ENCODE measurements at regions of chr7 and their contacts with region 1.

Region 1: DNA sequence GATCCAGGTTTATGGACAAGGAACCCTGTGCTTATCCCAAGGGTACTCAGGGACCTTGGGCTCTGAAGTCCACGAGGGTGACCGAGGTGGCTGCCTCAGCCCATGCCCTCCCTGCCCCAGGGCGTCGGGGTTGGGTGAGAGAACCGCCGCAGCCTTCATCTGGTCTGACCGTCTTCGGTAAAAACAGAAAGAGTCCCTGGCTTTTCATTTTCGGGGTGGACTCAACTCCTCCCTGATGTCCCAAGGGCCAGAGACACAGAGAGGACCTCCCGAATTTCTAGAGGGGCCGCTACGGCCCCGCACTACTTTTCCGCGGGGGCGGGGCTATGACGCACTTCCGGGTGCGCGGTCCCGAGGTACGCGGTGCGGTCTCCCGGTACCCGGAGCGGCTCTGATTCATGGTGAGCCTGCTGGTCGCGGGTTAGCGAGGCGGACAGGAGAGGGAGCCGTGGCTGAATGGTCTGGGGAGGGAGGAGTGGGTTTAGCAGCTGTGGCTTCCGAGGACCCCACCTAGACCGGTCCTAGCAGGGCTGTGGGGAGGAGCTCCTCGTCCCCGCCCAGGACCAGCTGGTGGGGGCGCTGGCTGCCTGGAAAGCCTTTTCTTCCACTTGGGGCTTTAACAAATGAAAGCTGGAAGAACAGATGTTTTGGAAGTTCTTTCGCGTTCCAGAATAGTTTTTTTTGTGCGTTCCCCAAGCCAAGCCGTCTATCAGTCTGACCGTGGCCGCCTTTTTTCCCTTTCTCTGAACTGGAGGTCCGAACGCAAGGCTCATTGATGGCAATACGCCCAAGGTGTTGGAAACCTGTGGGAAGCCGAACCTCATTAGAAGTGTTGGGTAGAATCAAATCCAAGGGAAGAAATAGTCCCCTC is at the start of gene ZSCAN21:
- DNase-seq: peak; percentile 84
- H3K4me3 ChIP-seq: peak within 1 kb of the TSS; percentile 64
- H3K27ac ChIP-seq: peak within 1 kb of the TSS; percentile 90
- H3K4me1 ChIP-seq: peaks cover 5% of the 10 kb centered on the region
- H3K27me3 ChIP-seq: no peaks in the 10 kb centered on the region
- CTCF ChIP-seq: no peak
- total RNA-seq, gene ZSCAN21: 6.2 to 7.7 TPM

Region 2: DNA sequence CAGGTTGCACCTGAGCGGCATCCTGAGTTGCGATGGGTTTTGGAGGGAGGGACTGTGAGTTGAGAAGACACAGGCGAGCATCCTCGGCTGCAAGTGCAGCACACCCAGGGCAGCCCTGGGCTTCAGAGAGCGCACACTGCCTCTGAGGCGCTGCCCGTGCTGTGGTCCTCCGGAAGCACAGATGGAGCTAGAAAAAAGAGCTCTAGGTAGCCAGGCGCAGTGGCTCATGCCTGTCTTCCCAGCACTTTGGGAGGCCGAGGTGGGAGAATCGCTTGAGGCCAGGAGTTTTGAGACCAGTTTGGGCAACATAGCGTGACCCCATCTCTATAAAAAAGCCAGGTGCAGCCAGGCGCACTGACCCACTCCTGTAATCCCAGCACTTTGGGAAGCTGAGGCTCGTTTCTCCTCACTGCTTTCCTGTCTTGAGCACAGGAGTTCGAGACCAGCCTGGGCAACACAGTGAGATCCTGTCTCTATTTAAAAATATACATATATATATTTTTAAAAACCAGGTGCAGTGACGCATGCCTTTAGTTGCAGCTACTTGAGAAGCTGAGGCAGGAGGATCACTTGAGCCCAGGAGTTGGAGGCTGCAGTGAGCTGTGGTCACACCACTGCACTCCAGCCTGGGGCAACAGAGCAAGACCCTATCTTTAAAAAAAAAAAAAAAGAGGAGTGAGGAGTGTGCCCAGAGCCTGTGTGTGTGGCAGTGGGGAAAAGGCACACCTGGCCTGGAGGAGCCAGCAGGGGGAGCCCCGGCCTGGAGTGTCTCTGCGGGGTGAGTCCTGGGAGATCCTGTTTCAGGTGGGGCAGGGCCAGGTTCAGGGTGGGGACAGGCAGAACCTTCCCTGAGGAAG is 684.5 kb before region 1 on chr7:
- intact Hi-C with region 1: no loop called
- DNase-seq: peak; percentile 82
- H3K4me3 ChIP-seq: no peak overlapping the region
- H3K27ac ChIP-seq: no peak overlapping the region
- H3K4me1 ChIP-seq: no peaks in the 10 kb centered on the region
- H3K27me3 ChIP-seq: no peaks in the 10 kb centered on the region
- CTCF ChIP-seq: peak; percentile 67

Region 3: DNA sequence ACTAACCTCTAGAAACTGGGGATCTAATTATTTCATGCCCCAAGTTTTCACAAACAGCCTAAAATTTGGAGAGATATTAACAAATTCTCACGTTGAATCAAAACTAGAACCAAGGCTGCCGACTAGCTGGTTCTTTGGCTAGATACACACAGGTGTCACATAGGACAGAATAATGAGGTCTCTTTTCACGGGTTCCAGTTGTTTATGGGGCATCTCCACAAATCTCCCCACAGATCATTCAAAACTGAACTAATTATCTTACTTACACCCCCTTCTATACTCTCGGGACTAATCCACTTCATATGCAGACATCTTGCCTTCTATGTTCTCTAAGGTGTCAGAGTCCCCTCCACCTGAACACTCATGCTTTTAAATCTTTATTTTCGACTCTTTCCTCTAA is 156.4 kb before region 1 on chr7:
- intact Hi-C with region 1: no loop called
- DNase-seq: no peak
- H3K4me3 ChIP-seq: no peak overlapping the region
- H3K27ac ChIP-seq: no peak overlapping the region
- H3K4me1 ChIP-seq: no peaks in the 10 kb centered on the region
- H3K27me3 ChIP-seq: no peaks in the 10 kb centered on the region
- CTCF ChIP-seq: no peak

Region 4: GRCh38 chr7:100081535-100082102 is 31.9 kb after region 1 on chr7 and contains the start of gene ZNF3:
- intact Hi-C with region 1: loop called (anchors 5 kb)
- DNase-seq: peak; percentile 99
- H3K4me3 ChIP-seq: peak within 1 kb of the TSS; percentile 97
- H3K27ac ChIP-seq: peak within 1 kb of the TSS; percentile 82
- H3K4me1 ChIP-seq: peaks cover 19% of the 10 kb centered on the region
- H3K27me3 ChIP-seq: no peaks in the 10 kb centered on the region
- CTCF ChIP-seq: peak; percentile 94
- total RNA-seq, gene ZNF3: 30.1 to 31.9 TPM

Measured in colonic mucosa (tissue), 4 donors.